ENCODE measurements at regions of chr15 and their contacts with region 1.

Region 1: DNA sequence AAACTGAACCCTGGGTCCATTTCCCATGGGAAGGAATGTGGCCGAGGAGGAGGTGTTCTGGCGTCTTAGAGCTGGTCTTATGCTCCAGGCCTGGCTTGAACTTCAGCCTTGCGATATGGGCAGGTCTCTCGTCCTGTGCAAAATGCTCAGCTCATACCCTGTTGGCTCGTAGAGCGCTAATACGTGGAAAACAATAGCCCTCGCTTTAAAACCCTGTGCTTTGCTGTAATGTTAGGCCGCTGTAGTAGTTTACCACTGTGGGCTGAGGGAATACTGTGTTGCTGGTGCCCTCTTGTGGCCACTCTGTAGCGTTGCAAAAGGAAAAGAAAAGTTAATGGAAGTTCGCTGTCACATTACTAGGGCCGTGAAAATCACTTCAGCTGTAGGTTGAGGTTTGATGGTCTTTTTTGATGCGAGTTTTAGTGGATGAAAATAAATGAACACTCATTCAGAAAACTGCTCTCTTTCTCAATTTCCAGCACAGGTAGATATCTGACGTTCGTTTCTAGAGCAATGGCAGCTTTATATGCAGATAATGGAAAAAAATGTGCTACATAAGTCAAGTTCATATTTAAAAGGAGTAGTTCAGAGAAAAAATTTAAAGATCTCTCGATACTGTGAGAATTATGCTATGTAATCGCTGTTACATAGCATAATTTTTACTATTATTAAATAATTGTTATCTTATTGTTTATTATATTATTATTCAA is 92.9 kb downstream of the MCTP2 start:
- DNase-seq: peak; percentile 73
- H3K4me3 Mint-ChIP-seq: no peak overlapping the region
- H3K27ac Mint-ChIP-seq: no peak overlapping the region
- H3K4me1 Mint-ChIP-seq: peaks cover 7% of the 10 kb centered on the region
- H3K27me3 Mint-ChIP-seq: no peaks in the 10 kb centered on the region

Region 2: DNA sequence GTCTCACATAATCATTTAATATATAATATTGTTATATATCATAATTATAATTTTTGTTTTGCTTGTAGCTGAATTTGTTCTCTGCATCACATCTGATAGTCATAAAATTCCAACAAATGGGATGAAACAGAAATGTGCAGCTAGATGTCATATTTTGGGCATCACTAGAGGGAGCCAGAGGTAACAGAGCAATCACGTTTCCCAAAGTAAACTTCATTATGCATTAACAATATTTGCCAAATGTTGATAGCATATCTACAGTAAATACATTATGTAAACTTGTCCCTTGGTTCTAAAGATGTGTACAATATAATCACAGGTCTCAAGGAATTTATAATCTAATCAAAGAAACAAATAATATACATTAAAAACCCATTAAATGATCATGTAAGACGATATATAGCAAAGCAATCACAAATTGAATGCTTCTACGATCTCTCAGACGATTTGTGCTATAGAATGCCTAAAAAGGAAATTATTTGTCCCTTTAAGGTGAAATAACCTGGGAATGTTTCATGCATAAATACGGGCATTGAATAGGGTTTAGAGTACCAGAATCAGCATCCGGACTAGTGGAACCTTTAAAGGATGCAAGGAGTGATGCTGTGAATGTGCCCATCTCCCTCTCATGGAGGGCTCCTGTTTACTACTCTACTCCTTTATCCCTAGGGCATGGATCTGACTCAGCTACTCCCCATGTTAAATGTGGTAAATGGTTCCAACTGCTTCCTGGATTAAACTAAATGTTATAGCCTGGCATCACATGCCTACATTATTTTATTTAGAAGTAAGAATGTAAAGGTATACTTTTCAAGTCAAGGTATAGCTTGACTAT is 327.0 kb before region 1 on chr15:
- CTCF ChIA-PET with region 1: no interaction called
- intact Hi-C with region 1: loop called (anchors 5 kb)
- DNase-seq: no peak
- H3K4me3 Mint-ChIP-seq: no peak overlapping the region
- H3K27ac Mint-ChIP-seq: no peak overlapping the region
- H3K4me1 Mint-ChIP-seq: no peaks in the 10 kb centered on the region
- H3K27me3 Mint-ChIP-seq: no peaks in the 10 kb centered on the region

Region 3: GRCh38 chr15:94163999-94164807 is 160.1 kb before region 1 on chr15:
- CTCF ChIA-PET with region 1: interaction called, 204 read pairs
- intact Hi-C with region 1: loop called (anchors 1 kb)
- DNase-seq: peak; percentile 76
- H3K4me3 Mint-ChIP-seq: no peak overlapping the region
- H3K27ac Mint-ChIP-seq: no peak overlapping the region
- H3K4me1 Mint-ChIP-seq: no peaks in the 10 kb centered on the region
- H3K27me3 Mint-ChIP-seq: no peaks in the 10 kb centered on the region

Region 4: GRCh38 chr15:94206463-94207167 is 117.7 kb before region 1 on chr15:
- CTCF ChIA-PET with region 1: interaction called, 3 read pairs
- intact Hi-C with region 1: loop called (anchors 1 kb)
- DNase-seq: peak; percentile 70
- H3K4me3 Mint-ChIP-seq: no peak overlapping the region
- H3K27ac Mint-ChIP-seq: peak overlapping the region; percentile 69
- H3K4me1 Mint-ChIP-seq: peaks cover 15% of the 10 kb centered on the region
- H3K27me3 Mint-ChIP-seq: peaks cover 24% of the 10 kb centered on the region

Region 5: GRCh38 chr15:94287794-94288246 is 36.5 kb before region 1 on chr15:
- CTCF ChIA-PET with region 1: interaction called, 18 read pairs
- intact Hi-C with region 1: no loop called
- DNase-seq: peak; percentile 71
- H3K4me3 Mint-ChIP-seq: no peak overlapping the region
- H3K27ac Mint-ChIP-seq: no peak overlapping the region
- H3K4me1 Mint-ChIP-seq: peaks cover 37% of the 10 kb centered on the region
- H3K27me3 Mint-ChIP-seq: peaks cover 3% of the 10 kb centered on the region

Region 6: GRCh38 chr15:94335616-94336015 is 11.3 kb after region 1 on chr15:
- CTCF ChIA-PET with region 1: interaction called, 33 read pairs
- intact Hi-C with region 1: no loop called
- DNase-seq: no peak
- H3K4me3 Mint-ChIP-seq: no peak overlapping the region
- H3K27ac Mint-ChIP-seq: no peak overlapping the region
- H3K4me1 Mint-ChIP-seq: no peaks in the 10 kb centered on the region
- H3K27me3 Mint-ChIP-seq: no peaks in the 10 kb centered on the region

Region 7: DNA sequence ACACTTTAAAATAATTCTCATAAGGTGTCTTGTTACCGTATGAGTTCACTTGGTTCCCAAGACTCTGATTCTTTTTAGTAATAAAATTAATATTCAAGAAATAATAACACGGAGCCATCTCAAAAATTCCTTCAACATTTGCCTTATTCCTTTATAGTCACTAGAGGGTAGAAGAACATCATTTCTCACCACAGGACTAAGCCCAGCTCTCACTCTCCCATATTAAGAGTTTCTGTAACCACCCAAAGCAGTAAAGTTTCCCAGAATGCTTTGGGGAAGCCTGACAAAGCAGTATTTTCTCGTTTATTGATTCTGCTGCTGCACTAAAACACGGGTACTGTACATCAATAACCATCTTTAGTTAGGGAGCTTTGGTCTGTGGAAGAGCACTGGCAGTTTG is 22.0 kb after region 1 on chr15:
- CTCF ChIA-PET with region 1: interaction called, 13 read pairs
- intact Hi-C with region 1: no loop called
- DNase-seq: no peak
- H3K4me3 Mint-ChIP-seq: no peak overlapping the region
- H3K27ac Mint-ChIP-seq: no peak overlapping the region
- H3K4me1 Mint-ChIP-seq: no peaks in the 10 kb centered on the region
- H3K27me3 Mint-ChIP-seq: no peaks in the 10 kb centered on the region

Region 8: GRCh38 chr15:94829887-94830884 is 505.9 kb after region 1 on chr15:
- CTCF ChIA-PET with region 1: no interaction called
- intact Hi-C with region 1: no loop called
- DNase-seq: no peak
- H3K4me3 Mint-ChIP-seq: no peak overlapping the region
- H3K27ac Mint-ChIP-seq: no peak overlapping the region
- H3K4me1 Mint-ChIP-seq: no peaks in the 10 kb centered on the region
- H3K27me3 Mint-ChIP-seq: peaks cover 6% of the 10 kb centered on the region